K562 (cell line): ENCODE measurements at regions of chr7 and their contacts with region 1.

Region 1: DNA sequence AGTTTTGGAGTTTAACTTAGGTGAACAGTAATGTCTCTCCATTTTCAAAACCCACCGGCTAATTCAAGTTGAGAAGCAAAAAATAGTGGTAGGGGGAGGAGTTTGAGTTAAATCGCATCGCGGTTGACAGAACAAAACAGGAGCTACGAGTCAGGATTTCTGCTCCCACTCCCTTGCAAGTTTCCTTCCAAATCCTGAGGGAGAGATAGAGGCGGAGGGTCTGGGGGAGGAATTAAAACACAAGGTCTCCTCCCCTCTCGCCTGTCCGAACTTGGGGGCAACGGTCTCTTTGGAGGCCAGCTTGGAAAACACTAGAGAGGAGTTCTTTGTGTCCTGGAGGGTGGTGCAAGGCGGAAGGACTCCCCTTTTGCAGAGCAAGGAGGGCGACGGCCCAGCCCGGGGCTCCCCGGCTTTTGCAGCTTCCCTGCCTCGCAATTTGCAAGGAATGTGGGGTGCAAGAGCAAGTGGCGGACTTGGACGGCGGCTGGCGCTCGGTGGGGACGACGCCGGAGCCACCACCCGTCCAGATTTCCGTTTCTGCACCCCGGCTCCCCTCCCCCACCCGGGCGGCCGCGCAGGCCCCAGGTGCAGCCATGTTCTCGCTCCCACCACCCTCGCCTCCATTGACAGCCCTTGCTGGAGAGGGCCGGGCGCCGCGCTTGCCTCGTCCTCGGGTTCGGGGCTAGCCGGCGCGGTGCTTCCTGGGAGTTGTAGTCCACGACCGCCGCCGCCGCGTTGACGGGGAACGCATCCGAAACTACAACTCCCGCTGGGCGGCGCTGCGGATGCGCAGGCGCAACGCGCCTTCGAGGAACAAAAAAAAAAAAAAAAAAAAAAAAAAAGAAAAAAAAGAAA is 454 bp upstream of the GTF2I start:
- DNase-seq: peak; percentile 90 to 99 (median 93)
- ATAC-seq: peak; percentile 89
- H3K4me3 ChIP-seq: peak overlapping the region; percentile 99
- H3K27ac ChIP-seq: peak overlapping the region; percentile 99
- H3K4me1 ChIP-seq: peaks cover 26 to 54% of the 10 kb centered on the region in 2 experiments
- H3K27me3 ChIP-seq: no peaks in the 10 kb centered on the region
- CTCF ChIP-seq: peak in 1 of 3 experiments; percentile 25; a peak in 1 of 6 replicates
- EP300 ChIP-seq: no peak
- POLR2A ChIP-seq: peak; percentile 83
- RAD21 ChIP-seq: no peak

Region 2: DNA sequence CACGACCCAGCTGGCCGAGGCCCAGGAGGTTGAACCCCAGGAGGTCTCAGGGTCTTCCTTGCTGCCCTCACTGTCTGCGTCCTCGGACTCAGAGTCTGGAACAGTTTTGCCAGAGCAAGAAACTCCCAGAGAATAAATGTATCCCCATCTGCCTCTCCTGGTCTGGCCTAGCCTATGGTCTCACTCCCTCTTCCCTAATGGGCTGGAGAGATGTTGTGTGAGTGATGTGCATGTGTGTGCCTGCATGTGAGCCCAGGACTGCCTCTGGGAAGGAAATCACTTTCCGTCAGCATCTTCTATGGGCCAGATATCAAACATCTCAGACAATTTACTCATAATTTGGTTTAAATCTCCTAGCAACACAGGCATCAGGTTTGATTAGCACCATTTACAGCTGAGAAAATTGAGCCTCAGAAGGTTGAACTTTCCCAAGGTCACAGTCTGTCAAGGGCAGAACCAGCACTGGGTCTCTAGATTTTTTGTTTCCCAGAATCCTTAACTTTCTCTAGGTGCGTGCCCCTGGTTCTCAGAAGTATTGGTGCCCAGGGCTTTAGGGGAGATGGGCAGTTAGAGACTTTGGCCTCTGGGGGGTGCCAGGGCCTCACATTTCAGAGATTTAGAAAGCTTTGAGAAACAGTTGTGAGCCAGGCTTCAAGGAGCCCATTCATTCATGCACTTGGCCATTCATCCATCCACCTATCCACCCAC is 791.2 kb before region 1 on chr7:
- CTCF ChIA-PET with region 1: no interaction called
- POLR2A ChIA-PET with region 1: no interaction called
- in situ Hi-C with region 1: no loop called
- intact Hi-C with region 1: no loop called
- DNase-seq: peak in 3 of 4 experiments; percentile 53 to 71 (median 61)
- ATAC-seq: peak; percentile 83
- H3K4me3 ChIP-seq: no peak overlapping the region
- H3K27ac ChIP-seq: no peak overlapping the region
- H3K4me1 ChIP-seq: peaks cover 0 to 16% of the 10 kb centered on the region in 2 experiments; a peak in 3 of 5 replicates
- H3K27me3 ChIP-seq: peaks cover 9 to 51% of the 10 kb centered on the region in 2 experiments; a peak in 3 of 5 replicates
- CTCF ChIP-seq: peak; percentile 72 to 94 (median 79)
- EP300 ChIP-seq: no peak
- POLR2A ChIP-seq: no peak
- RAD21 ChIP-seq: peak; percentile 84

Region 3: DNA sequence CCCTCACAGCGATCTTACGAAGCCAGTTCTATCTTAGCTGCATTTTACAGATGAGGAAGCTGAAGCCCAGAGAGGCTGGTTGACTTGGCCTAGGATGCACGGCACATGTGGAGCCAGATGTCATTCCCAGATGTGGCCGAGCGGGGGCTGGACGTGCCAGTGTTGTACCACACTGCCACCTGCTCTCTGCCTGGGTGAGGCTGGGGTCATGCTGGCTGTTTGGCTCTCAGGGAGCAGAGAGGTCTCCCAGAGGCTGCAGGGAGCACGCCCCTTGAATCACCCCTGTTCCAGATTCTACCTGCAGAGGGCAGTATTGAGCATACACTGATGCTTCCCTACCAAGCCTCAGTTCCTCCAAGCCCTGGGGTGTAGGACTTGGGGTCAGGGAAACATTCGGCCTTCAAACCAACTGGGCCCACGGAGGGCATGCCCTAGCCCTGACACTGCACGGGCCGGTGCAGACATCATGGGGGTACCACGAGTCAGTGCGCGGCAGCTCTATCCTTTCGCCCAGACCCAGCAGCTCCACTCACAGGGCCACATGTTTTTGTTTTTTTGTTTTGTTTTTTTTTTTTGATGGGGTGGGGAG is 207.2 kb before region 1 on chr7:
- CTCF ChIA-PET with region 1: interaction called, 3 read pairs
- POLR2A ChIA-PET with region 1: no interaction called
- in situ Hi-C with region 1: no loop called
- intact Hi-C with region 1: loop called (anchors 10 kb)
- DNase-seq: peak; percentile 80 to 87 (median 84)
- ATAC-seq: peak; percentile 63
- H3K4me3 ChIP-seq: no peak overlapping the region
- H3K27ac ChIP-seq: no peak overlapping the region
- H3K4me1 ChIP-seq: peaks cover 21 to 34% of the 10 kb centered on the region in 2 experiments
- H3K27me3 ChIP-seq: peaks cover 3 to 10% of the 10 kb centered on the region in 2 experiments; a peak in 4 of 5 replicates
- CTCF ChIP-seq: peak; percentile 83 to 96 (median 84)
- EP300 ChIP-seq: no peak
- POLR2A ChIP-seq: no peak
- RAD21 ChIP-seq: peak; percentile 43 to 64

Region 4: DNA sequence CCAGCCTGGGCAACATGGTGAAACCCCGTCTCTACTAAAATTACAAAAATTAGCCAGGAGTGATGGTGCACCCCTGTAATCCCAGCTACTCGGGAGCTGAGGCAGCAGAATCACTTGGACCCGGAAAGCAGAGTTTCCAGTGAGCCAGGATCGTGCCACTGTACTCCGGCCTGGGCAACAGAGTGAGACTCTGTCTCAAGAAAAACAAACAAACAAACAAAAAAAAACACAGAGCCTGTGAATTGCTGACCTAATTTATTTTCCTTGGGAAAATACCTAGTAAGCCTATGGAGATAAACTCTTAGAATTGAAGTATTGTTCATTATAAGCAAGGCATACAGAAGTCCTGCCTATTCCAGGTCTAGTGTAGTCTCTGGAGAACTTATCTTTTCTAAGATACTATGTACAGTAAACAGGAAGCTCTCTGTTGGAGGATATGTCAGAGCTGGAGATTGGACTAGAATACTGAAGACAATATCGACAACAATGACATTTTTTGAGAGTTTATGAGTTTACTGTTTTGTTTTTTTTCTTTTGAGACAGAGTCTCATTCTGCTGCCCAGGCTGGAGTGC is 15.4 kb after region 1 on chr7:
- CTCF ChIA-PET with region 1: no interaction called
- POLR2A ChIA-PET with region 1: interaction called, 42 read pairs
- in situ Hi-C with region 1: no loop called
- intact Hi-C with region 1: no loop called
- DNase-seq: no peak
- ATAC-seq: peak; percentile 72
- H3K4me3 ChIP-seq: no peak overlapping the region
- H3K27ac ChIP-seq: no peak overlapping the region
- H3K4me1 ChIP-seq: peaks cover 3 to 4% of the 10 kb centered on the region in 2 experiments; a peak in 1 of 5 replicates
- H3K27me3 ChIP-seq: no peaks in the 10 kb centered on the region
- CTCF ChIP-seq: no peak
- EP300 ChIP-seq: no peak
- POLR2A ChIP-seq: no peak
- RAD21 ChIP-seq: no peak